HEK293 (cell line): ENCODE measurements at regions of chr3 and their contacts with region 1.

Region 1: DNA sequence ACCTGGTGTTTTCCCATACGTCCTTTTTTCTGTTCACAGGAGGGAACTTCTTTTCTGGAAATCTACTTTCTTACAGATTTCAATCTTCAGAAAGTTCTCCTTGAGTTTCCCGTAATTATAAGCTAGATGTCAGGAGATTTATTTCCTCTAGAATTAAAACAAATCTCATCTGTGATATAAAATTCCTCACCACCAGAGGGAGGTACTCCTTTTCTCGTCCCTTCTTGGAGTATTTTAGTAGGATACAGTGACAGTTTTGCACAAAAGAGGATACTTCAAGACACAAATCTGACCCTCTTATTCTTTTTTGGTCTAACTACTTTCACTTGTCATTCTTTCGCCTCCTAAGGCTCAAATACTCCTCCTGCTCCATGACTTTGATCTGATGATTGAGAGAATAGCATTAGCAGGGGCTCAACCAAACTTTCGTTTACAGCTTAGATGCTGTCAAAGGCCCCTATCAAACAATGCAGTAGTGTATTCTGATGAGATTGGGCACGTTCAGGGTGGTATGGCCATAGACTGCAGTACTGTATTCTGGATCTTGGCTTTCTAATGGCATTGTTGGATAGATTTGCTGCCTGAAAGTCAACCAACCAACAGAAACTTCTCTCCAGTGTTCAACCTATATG is 38.0 kb downstream of the TMEM41A start:
- H3K4me3 ChIP-seq: no peak overlapping the region
- H3K27ac ChIP-seq: no peak overlapping the region
- H3K4me1 ChIP-seq: no peaks in the 10 kb centered on the region
- CTCF ChIP-seq: no peak

Region 2: DNA sequence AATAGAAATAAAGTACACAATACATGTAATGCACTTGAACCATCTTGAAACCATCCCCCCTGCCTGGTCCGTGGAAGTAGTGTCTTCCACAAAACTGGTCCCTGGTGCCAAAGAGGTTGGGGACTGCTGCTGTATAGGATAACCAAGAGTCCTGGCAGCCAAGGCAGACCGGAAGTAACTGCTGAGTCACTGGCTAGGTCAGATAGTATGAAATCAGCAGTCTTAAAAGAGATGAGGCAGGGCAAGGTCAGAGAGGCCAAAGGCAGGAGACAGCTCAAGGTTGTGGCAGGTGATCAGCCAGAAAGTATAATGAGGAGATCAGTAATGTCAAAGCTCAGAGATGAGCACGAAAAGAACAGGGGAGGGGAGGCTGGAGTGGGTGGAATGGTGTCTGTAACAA is 37.7 kb before region 1 on chr3:
- CTCF ChIA-PET with region 1: no interaction called
- POLR2A ChIA-PET with region 1: no interaction called
- H3K4me3 ChIP-seq: no peak overlapping the region
- H3K27ac ChIP-seq: no peak overlapping the region
- H3K4me1 ChIP-seq: no peaks in the 10 kb centered on the region
- CTCF ChIP-seq: no peak

Region 3: DNA sequence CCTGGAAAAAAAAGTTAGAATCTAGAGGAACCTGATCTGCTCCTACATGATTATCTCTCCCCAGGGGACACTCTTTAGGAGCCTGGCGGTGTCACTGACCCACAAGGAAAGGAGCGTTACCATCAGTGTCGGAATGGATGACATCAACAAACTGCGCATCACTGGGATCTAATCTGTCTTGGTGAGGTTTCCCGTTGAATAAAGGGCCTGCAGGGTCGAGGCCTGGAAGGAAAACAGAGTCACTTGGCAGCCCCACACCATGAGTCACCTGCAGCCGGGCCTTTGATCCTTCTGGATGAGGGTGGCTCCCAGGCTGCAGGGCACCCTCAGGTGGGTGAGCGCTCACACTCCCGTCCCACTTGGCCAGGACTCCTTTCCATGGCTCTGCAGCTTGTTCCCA is 66.5 kb after region 1 on chr3:
- CTCF ChIA-PET with region 1: no interaction called
- POLR2A ChIA-PET with region 1: no interaction called
- H3K4me3 ChIP-seq: no peak overlapping the region
- H3K27ac ChIP-seq: no peak overlapping the region
- H3K4me1 ChIP-seq: no peaks in the 10 kb centered on the region
- CTCF ChIP-seq: no peak

Region 4: GRCh38 chr3:185585859-185586685 is 125.2 kb after region 1 on chr3 and contains the start of gene SENP2:
- CTCF ChIA-PET with region 1: interaction called, 10 read pairs
- POLR2A ChIA-PET with region 1: no interaction called
- H3K4me3 ChIP-seq: peak within 1 kb of the TSS; percentile 85
- H3K27ac ChIP-seq: peak within 1 kb of the TSS; percentile 53
- H3K4me1 ChIP-seq: no peaks in the 10 kb centered on the region
- CTCF ChIP-seq: 0 out of 2 replicates have a peak, but pooled peaks have one; percentile 22